Vagina (tissue), 2 donors: ENCODE measurements at regions of chr12 and their contacts with region 1.

Region 1: DNA sequence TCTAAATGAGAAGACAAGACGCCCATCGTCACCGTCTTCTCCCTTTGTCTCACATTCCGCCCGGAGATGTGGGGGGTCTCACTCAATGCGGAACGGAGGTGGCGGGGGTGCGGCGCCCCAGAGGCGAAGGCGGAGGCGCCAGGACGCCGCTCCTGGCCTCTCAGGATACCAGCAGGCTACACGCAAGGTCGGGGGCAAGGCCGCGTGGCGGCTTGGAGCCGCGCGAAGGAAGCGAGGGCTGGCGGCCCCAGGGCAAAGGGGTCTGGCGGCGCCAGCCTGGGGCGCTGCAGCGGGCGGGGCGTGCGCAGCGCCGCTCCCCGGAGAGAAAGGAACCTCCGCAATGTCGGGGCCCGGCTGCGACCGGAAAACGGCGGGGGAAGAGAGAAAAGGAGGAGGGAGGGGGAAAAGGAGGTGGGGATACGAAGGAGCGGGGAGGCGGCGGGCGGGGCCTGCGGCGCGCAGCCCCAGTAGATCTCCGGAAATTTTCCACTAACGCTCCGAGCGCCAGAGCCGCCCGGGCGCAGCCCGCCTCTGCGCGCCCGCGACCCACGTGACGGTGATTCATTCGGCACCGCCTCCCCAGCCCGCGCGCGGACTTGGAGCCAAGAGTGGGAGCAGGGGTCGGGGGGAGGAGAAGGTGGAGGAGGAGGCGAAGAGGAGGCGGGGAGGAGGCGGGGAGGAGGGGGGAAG is 10.5 kb upstream of the SLC38A2 start:
- DNase-seq: no peak
- H3K4me3 ChIP-seq: peak overlapping the region; percentile 72
- H3K27ac ChIP-seq: peak overlapping the region; percentile 100
- H3K4me1 ChIP-seq: peaks cover 52% of the 10 kb centered on the region
- H3K27me3 ChIP-seq: no peaks in the 10 kb centered on the region
- CTCF ChIP-seq: peak in 2 of 3 experiments; percentile 21 to 28
- POLR2A ChIP-seq: peak in 1 of 2 donors; percentile 91

Region 2: DNA sequence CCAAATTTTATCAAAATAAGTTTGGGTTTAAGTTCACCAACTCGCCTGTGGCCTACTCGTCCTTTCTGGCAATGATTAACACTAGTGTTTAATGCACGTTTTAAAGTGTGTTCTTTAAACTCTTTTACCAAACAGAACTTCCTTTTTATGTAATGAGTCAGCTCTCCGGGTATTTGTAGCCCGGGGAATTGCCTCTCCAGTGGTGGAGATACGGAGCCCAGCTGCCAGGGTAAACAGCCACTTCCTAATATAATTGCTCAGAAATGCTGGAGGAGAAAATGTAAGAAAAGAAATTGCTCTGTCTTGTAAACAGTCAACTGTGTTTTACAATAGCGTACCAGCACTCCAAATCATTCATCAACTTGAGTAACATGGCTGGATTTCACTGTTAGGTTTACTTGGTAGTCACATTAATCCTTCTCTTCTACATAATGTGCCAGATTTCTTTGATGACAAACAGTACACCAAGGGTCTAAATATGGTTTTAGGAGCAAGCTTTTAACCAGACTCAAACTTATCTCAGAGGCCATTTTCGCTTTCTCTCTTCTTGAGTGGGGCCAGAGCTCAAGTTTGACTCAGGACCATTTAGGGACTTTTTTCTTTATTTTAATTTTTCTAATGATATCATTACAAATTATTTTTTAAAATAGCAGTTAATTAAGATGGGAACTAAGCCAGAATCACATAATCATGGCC is 90.7 kb after region 1 on chr12:
- intact Hi-C with region 1: loop called (anchors 10 kb)
- DNase-seq: no peak
- H3K4me3 ChIP-seq: no peak overlapping the region
- H3K27ac ChIP-seq: peak overlapping the region; percentile 80
- H3K4me1 ChIP-seq: peaks cover 28% of the 10 kb centered on the region
- H3K27me3 ChIP-seq: no peaks in the 10 kb centered on the region
- CTCF ChIP-seq: no peak
- POLR2A ChIP-seq: no peak